BJ (cell line): ENCODE measurements at regions of chr3 and their contacts with region 1.

Region 1: GRCh38 chr3:158644345-158644908 is at the start of gene GFM1:
- DNase-seq: peak; percentile 80
- H3K4me3 ChIP-seq: peak within 1 kb of the TSS; percentile 99
- H3K27me3 ChIP-seq: no peaks in the 10 kb centered on the region
- CTCF ChIP-seq: peak; percentile 94
- polyA plus RNA-seq, gene GFM1: 13.9 and 25.6 TPM in 2 replicates

Region 2: GRCh38 chr3:158420654-158421396 is 223.6 kb before region 1 on chr3:
- CTCF ChIA-PET with region 1: no interaction called
- POLR2A ChIA-PET with region 1: no interaction called
- DNase-seq: peak; percentile 2
- H3K4me3 ChIP-seq: no peak overlapping the region
- H3K27me3 ChIP-seq: no peaks in the 10 kb centered on the region
- CTCF ChIP-seq: no peak

Region 3: DNA sequence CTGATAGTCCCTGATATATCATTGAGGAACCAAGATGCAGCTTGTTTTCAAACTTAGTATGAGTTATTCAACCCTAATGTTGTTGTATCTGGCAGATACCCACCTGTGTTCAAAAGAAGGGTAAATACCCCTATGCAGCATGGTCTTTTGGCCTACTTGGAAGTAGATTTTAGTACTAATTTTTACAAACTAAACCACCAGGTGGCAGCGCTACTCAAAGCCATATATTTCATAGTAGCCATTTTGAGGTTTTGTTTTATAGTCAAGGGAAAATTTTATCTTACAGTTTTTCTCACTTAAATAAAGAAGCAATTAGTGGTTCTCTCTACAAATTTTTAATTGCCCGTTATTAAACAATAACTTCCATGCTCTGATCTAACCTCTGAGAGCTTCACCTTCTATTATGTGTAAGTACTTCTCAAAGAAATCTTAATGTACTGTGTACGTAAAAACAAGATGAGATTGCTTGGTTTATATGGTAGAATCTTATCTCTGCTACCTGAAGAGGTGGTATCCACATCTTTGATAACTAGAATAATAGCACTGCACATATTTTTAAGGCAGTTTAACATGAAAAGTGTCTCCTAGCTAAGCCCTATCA is 104.9 kb before region 1 on chr3:
- CTCF ChIA-PET with region 1: interaction called, 11 read pairs
- POLR2A ChIA-PET with region 1: no interaction called
- DNase-seq: peak; percentile 7
- H3K4me3 ChIP-seq: no peak overlapping the region
- H3K27me3 ChIP-seq: no peaks in the 10 kb centered on the region
- CTCF ChIP-seq: peak; percentile 61

Region 4: GRCh38 chr3:158570999-158571974 is 73.1 kb before region 1 on chr3 and contains the start of gene MLF1:
- CTCF ChIA-PET with region 1: interaction called, 6 read pairs
- POLR2A ChIA-PET with region 1: interaction called, 22 read pairs
- DNase-seq: peak; percentile 67
- H3K4me3 ChIP-seq: peak within 1 kb of the TSS; percentile 60
- H3K27me3 ChIP-seq: no peaks in the 10 kb centered on the region
- CTCF ChIP-seq: no peak
- polyA plus RNA-seq, gene MLF1: 4.4 and 7.4 TPM in 2 replicates